ENCODE measurements at regions of chr15 and their contacts with region 1.

Region 1: DNA sequence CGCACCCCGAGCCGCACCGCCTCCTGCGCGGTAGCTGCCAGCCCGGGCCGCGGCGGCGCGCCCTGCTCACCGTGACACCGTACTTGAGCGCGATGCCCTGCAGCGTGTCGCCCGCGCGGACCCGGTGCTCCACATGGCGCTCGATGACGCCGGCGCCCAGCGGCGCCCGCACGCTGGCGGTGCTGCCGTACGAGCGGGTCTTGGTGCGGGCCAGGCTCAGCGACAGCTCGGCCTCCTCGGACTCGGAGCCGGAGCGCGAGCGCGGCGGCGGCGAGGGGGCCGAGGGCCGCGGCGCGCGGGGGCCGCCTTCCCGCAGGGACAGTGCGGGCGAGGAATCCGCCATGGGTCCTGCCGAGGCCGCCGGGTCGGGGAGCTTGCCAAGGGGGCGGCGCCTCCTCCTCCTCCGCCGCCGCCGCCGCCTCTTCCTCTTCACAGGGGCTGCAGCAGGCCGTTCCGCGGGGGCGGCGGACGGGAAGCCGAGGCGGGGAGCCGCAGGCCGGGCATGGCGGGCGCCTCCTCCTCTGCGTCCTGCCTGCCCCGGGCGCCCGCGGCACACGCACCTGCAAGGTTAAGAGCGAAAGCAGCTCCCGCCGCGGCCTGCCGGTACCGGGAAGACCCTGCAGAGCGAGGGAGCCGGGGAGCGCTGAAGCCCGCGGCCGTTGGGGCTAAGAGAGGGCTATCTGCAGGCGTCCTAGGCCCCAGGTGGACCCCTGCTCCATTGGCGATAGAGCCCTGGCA is at the start of gene LYSMD2:
- DNase-seq: peak; percentile 66
- H3K4me3 Mint-ChIP-seq: peak within 1 kb of the TSS; percentile 82
- H3K27ac Mint-ChIP-seq: peak within 1 kb of the TSS; percentile 91
- H3K4me1 Mint-ChIP-seq: peaks cover 54% of the 10 kb centered on the region
- H3K27me3 Mint-ChIP-seq: no peaks in the 10 kb centered on the region
- total RNA-seq, gene LYSMD2: 14.5 to 16.8 TPM

Region 2: DNA sequence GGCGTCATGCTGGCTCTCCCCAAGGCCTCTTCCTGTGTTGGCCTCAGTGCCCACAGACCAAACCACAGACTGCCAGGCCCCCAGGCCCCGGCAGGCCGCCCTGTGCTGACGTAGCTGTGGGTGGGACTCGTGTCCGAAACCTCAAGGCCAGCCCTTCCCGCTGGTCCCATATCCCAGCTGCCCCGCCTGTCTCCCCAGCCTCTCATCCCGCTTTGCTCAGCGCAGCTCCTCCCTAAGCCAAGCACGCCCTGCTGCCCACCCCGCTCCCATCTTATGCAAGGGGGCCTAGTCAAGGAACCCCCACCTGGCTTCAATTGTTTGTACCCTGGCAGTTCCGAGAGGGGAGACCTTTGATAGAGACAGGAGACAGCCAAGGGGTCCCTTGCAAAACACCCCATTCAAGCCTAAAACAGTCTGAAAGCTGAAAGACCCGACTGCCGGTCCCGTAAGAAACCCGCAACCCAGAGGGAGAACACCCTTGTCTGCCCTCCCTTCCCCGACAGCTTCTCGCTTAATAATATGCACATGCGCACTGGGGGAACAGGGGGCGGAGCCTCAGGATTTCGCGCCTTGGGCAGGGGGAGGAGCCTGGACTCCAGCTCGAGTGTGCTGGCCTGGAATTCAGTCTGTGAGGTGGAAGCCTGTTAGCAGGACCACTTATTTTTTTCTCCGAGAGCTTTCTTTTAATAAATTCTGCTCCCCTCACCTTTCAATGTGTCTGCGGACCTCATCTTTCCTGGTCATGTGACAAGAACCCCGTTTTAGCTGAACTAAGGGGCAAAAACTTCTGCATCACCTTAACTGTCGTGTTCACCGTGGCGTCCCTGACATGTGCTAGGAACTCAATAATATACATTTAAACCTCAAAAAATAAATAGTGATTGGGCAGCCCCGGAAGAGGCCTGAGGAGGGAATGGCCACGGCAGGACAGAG is 660.0 kb before region 1 on chr15:
- CTCF ChIA-PET with region 1: no interaction called
- intact Hi-C with region 1: loop called (anchors 5 kb)
- DNase-seq: peak; percentile 91
- H3K4me3 Mint-ChIP-seq: peak overlapping the region; percentile 68
- H3K27ac Mint-ChIP-seq: peak overlapping the region; percentile 85
- H3K4me1 Mint-ChIP-seq: peaks cover 24% of the 10 kb centered on the region
- H3K27me3 Mint-ChIP-seq: peaks cover 8% of the 10 kb centered on the region

Region 3: GRCh38 chr15:51438526-51438925 is 298.9 kb before region 1 on chr15:
- CTCF ChIA-PET with region 1: no interaction called
- intact Hi-C with region 1: no loop called
- DNase-seq: no peak
- H3K4me3 Mint-ChIP-seq: no peak overlapping the region
- H3K27ac Mint-ChIP-seq: no peak overlapping the region
- H3K4me1 Mint-ChIP-seq: no peaks in the 10 kb centered on the region
- H3K27me3 Mint-ChIP-seq: peaks cover 3% of the 10 kb centered on the region

Region 4: GRCh38 chr15:51649659-51650521 is 87.6 kb before region 1 on chr15:
- CTCF ChIA-PET with region 1: interaction called, 19 read pairs
- intact Hi-C with region 1: loop called (anchors 1 kb)
- DNase-seq: peak; percentile 60
- H3K4me3 Mint-ChIP-seq: no peak overlapping the region
- H3K27ac Mint-ChIP-seq: no peak overlapping the region
- H3K4me1 Mint-ChIP-seq: no peaks in the 10 kb centered on the region
- H3K27me3 Mint-ChIP-seq: no peaks in the 10 kb centered on the region

Region 5: GRCh38 chr15:51661072-51661471 is 76.4 kb before region 1 on chr15:
- CTCF ChIA-PET with region 1: no interaction called
- intact Hi-C with region 1: no loop called
- DNase-seq: no peak
- H3K4me3 Mint-ChIP-seq: no peak overlapping the region
- H3K27ac Mint-ChIP-seq: no peak overlapping the region
- H3K4me1 Mint-ChIP-seq: no peaks in the 10 kb centered on the region
- H3K27me3 Mint-ChIP-seq: no peaks in the 10 kb centered on the region

Region 6: DNA sequence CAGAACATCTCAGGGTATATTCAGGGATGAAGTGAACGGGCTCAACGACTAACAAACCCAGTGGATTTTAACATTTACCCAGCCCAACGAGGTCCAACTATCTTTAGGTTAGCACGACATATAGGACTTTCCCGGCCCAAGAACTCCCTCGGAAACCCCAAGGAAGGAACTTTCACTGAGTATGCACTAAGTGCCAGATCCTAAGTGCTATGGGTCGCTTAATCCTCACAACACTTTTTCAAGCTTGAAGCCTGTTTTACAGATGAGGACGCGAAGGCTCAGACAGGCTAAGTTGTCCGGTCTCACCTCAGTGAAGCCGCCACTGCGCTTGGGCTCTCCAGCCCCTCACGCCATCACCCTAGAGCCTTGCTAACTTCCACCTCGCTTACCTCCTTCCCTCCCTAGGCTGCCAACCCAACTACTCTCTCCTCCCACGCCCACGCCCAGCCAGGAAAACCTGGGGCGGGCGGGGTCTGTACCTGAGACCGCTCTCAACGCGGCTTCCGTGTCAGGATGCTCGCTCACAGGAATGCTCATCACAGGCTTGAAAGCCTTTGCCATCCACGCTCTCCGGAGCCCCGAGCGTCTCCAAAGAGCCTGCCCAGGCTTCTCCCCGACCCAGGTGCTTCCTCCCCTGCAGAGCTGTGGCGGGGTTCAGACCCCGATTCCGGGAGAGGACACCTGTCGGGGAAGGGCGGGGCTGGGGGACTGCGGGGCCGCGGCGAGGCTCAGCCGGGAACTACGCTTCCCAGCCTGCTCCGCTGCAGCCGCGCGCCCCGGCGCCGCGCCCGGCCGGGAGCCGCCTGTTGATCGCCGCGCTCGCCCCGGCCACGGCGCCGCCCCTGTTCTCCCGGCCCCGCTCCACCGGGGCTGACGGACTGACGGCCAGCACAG is 13.6 kb after region 1 on chr15 and contains the start of gene TMOD2:
- CTCF ChIA-PET with region 1: interaction called, 5 read pairs
- intact Hi-C with region 1: loop called (anchors 1 kb)
- DNase-seq: peak; percentile 53
- H3K4me3 Mint-ChIP-seq: peak within 1 kb of the TSS; percentile 81
- H3K27ac Mint-ChIP-seq: no peak within 1 kb of the TSS
- H3K4me1 Mint-ChIP-seq: peaks cover 27% of the 10 kb centered on the region
- H3K27me3 Mint-ChIP-seq: peaks cover 2% of the 10 kb centered on the region
- total RNA-seq, gene TMOD2: 6.4 to 6.8 TPM

Region 7: DNA sequence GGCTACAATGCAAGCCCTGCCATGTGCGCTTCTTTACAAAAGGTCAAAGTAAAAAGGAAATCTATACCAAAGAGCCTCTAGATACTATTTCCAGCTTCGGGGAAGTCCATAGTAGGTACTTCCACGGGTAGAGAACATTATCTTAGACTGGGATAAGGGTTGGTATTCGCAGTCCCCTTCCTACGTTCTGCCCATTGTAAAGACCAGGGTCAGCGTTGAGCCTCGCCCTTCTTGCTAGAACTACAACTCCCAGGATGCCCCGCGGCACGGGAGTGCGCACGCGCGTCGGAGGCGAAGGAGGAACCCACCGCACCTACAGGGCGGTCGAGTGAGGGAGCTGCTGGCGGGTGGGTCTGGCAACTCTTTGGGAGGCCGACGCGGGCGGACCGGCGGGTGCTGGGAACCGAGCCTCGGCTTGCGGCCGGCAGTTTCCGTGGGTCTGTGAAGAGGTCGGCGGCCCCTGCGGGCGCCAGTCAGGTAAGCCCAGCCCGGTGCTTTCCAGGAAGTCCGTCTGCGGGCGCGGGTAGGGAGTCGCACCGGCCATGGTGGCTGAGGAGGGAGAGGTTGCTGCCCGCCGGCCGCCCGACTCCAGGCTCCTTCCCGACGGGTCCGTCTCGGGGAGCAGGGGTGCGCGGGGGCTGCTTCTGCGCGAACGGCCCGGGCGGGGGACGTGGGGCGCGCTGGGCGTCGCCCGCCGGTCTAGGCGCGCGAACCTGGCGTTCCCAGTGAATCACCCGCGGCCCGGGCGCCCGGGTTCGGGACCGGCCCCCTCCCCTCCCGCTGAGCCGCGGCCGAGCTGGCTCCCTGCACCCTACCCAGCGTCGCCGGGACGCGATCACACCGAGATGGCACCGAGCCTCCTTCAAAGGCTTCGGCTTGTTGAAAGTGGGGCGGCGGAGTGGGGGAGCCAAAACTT is 92.2 kb after region 1 on chr15 and contains the start of gene TMOD3:
- CTCF ChIA-PET with region 1: no interaction called
- intact Hi-C with region 1: loop called (anchors 5 kb)
- DNase-seq: peak; percentile 91
- H3K4me3 Mint-ChIP-seq: peak within 1 kb of the TSS; percentile 89
- H3K27ac Mint-ChIP-seq: peak within 1 kb of the TSS; percentile 83
- H3K4me1 Mint-ChIP-seq: peaks cover 39% of the 10 kb centered on the region
- H3K27me3 Mint-ChIP-seq: no peaks in the 10 kb centered on the region
- total RNA-seq, gene TMOD3: 45.9 to 52.8 TPM

Region 8: GRCh38 chr15:52018693-52019387 is 281.4 kb after region 1 on chr15 and contains the start of gene MAPK6:
- CTCF ChIA-PET with region 1: no interaction called
- intact Hi-C with region 1: loop called (anchors 5 kb)
- DNase-seq: peak; percentile 93
- H3K4me3 Mint-ChIP-seq: peak within 1 kb of the TSS; percentile 97
- H3K27ac Mint-ChIP-seq: peak within 1 kb of the TSS; percentile 97
- H3K4me1 Mint-ChIP-seq: peaks cover 37% of the 10 kb centered on the region
- H3K27me3 Mint-ChIP-seq: no peaks in the 10 kb centered on the region
- total RNA-seq, gene MAPK6: 16.7 to 17.2 TPM

Region 9: DNA sequence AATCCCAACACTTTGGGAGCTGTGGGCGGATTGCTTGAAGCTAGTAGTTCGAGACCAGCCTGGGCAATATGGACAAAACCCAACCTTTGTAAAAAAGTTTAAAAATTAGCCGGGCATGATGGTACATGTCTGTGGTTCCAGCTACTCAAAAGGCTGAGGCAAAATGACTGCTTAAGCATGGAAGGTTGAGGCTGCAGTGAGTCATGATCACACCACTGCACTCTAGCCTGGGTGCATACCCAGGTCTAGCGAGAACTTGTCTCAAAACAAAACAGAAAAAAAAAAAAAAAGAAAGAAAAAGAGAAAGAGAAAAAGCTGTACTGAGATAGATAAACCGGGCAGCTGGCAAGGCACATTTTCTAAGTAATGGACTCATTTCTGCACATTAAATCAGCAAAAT is 820.7 kb after region 1 on chr15:
- CTCF ChIA-PET with region 1: no interaction called
- intact Hi-C with region 1: loop called (anchors 5 kb)
- DNase-seq: peak; percentile 82
- H3K4me3 Mint-ChIP-seq: peak overlapping the region; percentile 24
- H3K27ac Mint-ChIP-seq: peak overlapping the region; percentile 89
- H3K4me1 Mint-ChIP-seq: peaks cover 55% of the 10 kb centered on the region
- H3K27me3 Mint-ChIP-seq: no peaks in the 10 kb centered on the region

Region 10: DNA sequence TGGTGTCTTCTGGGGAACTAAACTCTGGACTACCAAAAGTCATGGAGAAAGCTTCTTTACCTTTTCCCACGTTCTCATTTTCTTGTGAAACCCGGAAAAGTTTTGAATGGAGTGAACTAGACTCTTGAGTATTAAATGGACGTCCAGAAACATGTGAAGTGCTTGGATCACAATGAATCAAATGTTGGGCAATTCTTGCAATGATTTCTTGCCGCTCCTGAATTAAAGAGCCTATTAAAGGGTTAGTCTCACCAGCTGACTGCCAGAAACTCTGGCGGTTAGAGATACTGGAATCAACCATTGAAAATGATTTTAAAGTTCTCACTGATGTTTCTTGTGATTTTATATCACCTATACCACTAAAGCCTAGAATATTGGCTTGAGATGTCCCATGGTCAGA is 872.1 kb after region 1 on chr15:
- CTCF ChIA-PET with region 1: no interaction called
- intact Hi-C with region 1: no loop called
- DNase-seq: no peak
- H3K4me3 Mint-ChIP-seq: no peak overlapping the region
- H3K27ac Mint-ChIP-seq: no peak overlapping the region
- H3K4me1 Mint-ChIP-seq: no peaks in the 10 kb centered on the region
- H3K27me3 Mint-ChIP-seq: no peaks in the 10 kb centered on the region

Measured in activated naive CD4-positive, alpha-beta T cell treated with anti-CD3 and anti-CD28 coated beads for 36 hours (primary cell).